ENCODE measurements at regions of chr6 and their contacts with region 1.

Region 1: DNA sequence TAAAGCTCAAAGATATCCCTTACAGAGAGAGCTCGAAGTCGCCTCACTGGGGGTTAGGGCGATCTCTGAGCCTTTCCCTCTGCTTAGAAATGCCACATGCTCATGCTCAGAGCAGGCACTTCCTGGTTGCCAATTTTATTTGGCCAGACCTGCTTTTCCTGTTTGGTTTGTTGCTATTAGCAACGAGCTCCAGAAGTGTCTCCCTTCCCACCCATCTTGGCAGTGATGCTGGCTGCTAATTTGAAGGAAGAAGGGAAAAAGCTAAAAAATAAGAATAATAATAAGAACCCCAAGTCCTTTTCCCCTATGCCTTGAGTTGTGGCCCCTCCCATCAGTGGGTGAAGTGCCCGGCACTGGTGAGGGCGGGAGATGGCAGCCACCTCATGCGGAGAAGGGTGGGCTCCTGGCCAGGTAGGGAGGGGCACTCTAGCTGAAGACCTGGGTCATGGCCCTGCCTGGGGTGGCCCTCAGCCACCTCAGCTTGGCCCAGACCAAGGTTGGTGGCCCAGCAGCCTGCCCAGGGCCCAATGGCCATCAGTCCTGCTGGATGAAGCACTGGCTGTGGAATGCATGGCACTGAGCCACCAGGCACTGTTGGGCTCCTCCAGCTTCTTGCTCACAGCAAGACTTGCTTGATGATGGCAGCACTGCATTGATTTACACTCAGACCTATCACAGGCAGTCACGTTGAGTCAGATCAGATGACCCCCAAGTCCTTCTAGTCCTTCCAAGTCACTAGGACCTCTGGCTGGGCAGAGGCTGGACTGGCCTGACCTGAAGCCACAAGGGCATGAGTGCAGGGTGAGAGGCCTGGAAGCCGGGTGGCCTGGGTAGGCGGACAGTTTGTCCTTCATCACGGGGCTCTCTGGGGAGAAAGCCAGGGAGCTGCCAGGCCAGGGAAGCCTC is 79.0 kb downstream of the SYNJ2 start:
- DNase-seq: peak; percentile 88 to 97
- H3K4me3 ChIP-seq: peak overlapping the region in 1 of 2 donors; percentile 12
- H3K27ac ChIP-seq: peak overlapping the region; percentile 86 to 96
- H3K4me1 ChIP-seq: peaks cover 6 to 48% (median 27%) of the 10 kb centered on the region in 4 donors
- H3K27me3 ChIP-seq: no peaks in the 10 kb centered on the region
- CTCF ChIP-seq: no peak

Region 2: DNA sequence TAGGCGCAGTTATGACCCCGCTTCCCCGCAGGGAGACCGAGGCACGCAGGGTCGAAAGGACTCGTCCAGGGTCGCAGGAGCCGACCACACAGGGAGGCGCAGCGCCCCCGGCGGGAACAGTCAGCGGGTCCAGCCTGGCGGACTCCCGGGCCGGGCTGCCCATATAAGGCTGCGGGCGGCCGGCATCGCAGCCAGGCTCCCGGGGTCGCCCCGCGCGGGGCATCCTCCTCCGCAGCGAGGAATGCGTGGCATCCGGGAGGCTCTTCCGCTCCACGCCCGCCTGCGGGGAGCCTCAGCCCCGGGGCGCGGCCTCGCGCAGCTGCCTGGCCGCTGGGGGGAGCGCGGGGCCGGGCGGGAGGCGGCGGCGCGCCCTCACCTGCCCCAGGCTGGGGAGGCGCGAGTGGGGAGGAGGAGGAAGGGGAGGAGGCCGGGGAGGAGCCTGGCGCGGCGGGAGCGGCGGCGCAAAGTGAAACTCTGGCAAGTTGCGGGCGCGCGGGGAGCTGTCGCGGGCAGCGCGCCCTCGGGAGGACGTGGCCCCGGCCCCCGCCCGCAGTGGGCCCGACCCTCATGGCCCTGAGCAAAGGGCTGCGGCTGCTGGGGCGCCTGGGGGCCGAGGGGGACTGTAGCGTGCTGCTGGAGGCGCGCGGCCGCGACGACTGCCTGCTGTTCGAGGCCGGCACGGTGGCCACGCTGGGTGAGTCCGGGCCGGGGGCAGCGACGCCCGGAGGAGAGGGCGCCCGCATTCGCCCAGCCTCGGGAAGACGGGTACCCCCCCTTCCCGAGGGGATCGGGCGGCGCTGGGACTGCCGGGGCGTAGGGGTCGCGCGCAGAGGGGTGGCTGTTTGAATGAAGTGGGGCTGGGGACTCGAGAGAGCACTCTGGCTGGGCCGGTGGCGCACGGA is 79.1 kb before region 1 on chr6 and contains the start of gene SYNJ2:
- intact Hi-C with region 1: loop called (anchors 5 kb)
- DNase-seq: peak; percentile 56 to 90
- H3K4me3 ChIP-seq: peak within 1 kb of the TSS; percentile 86 to 92
- H3K27ac ChIP-seq: peak within 1 kb of the TSS; percentile 85 to 87
- H3K4me1 ChIP-seq: peaks cover 0 to 42% (median 17%) of the 10 kb centered on the region in 4 donors
- H3K27me3 ChIP-seq: no peaks in the 10 kb centered on the region
- CTCF ChIP-seq: peak; percentile 62 to 67

Region 3: GRCh38 chr6:158686791-158687381 is 626.2 kb after region 1 on chr6:
- intact Hi-C with region 1: no loop called
- DNase-seq: peak in 1 of 2 donors; percentile 50
- H3K4me3 ChIP-seq: no peak overlapping the region
- H3K27ac ChIP-seq: no peak overlapping the region
- H3K4me1 ChIP-seq: peaks cover 0 to 8% (median 3%) of the 10 kb centered on the region in 4 donors
- H3K27me3 ChIP-seq: no peaks in the 10 kb centered on the region
- CTCF ChIP-seq: no peak

Measured in tibial artery (tissue), 4 donors.